Posterior cingulate gyrus (tissue), 11 donors: ENCODE measurements at regions of chr19 and their contacts with region 1.

Region 1: GRCh38 chr19:10315335-10316214 is at the start of gene FDX2:
- DNase-seq: peak; percentile 84 to 98 (median 92)

Region 2: GRCh38 chr19:10380313-10381102 is 64.9 kb after region 1 on chr19 and contains the start of gene TYK2:
- intact Hi-C with region 1: loop called (anchors 2 kb)
- DNase-seq: peak; percentile 95 to 100 (median 97)